ENCODE measurements at regions of chr11 and their contacts with region 1.

Region 1: DNA sequence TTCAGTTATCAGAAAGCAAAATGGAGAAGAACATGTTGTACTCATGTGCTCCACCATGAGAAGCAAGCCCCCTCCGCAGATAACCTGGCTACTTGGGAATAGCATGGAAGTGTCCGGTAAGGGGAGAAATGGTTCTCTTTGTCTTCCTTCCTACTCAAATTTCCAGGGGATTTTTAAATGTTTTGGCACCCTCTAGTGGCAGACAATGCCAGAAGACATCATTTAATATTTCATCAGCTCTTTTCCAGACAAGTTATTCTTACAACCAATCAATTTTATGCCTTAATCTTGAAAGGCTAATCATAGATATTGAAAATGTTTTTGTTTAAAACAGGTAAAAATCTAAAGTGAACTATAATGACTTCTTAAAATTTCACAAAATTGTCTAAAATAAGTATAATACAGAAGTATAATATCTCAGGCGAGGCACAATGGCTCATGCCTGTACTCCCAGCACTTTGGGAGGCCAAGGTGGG is 15.7 kb downstream of the CRTAM start:
- DNase-seq: peak; percentile 89
- H3K4me3 ChIP-seq: no peak overlapping the region
- CTCF ChIP-seq: peak; percentile 50

Region 2: DNA sequence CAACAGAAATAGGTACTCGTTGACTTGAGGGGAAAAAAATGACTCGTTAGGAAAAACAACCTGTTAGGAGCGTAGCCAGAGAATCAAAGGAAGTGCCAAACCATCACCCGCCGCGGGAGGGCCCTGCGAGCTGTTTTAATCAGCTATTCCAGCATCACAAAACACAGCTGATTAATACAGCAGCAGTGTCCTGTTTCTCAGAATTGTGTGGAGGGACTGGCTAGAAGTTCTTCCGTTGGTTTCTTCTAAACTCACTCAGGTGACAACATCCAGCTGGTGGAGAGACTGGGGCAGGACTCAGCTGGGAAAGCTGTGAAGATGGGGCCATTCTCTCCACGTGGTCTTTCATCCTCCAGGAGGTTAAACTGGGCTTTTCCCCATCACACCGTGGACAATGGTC is 179.9 kb after region 1 on chr11:
- in situ Hi-C with region 1: loop called (anchors 25 kb)
- DNase-seq: no peak
- H3K4me3 ChIP-seq: no peak overlapping the region
- CTCF ChIP-seq: peak; percentile 16

Region 3: GRCh38 chr11:123282597-123282996 is 428.6 kb after region 1 on chr11:
- in situ Hi-C with region 1: no loop called
- DNase-seq: no peak
- H3K4me3 ChIP-seq: no peak overlapping the region
- CTCF ChIP-seq: no peak